Caco-2 (cell line): ENCODE measurements at regions of chr6 and their contacts with region 1.

Region 1: GRCh38 chr6:39088331-39088730 is 26.7 kb downstream of the SAYSD1 start:
- DNase-seq: peak; percentile 62 to 70
- H3K4me3 ChIP-seq: no peak overlapping the region
- H3K4me3 Mint-ChIP-seq: no peak overlapping the region
- H3K27ac Mint-ChIP-seq: no peak overlapping the region
- H3K4me1 ChIP-seq: no peaks in the 10 kb centered on the region
- H3K4me1 Mint-ChIP-seq: no peaks in the 10 kb centered on the region
- H3K27me3 ChIP-seq: no peaks in the 10 kb centered on the region; the same call in 1 of the 2 replicates
- H3K27me3 Mint-ChIP-seq: no peaks in the 10 kb centered on the region
- CTCF ChIP-seq: peak; percentile 40 to 54

Region 2: DNA sequence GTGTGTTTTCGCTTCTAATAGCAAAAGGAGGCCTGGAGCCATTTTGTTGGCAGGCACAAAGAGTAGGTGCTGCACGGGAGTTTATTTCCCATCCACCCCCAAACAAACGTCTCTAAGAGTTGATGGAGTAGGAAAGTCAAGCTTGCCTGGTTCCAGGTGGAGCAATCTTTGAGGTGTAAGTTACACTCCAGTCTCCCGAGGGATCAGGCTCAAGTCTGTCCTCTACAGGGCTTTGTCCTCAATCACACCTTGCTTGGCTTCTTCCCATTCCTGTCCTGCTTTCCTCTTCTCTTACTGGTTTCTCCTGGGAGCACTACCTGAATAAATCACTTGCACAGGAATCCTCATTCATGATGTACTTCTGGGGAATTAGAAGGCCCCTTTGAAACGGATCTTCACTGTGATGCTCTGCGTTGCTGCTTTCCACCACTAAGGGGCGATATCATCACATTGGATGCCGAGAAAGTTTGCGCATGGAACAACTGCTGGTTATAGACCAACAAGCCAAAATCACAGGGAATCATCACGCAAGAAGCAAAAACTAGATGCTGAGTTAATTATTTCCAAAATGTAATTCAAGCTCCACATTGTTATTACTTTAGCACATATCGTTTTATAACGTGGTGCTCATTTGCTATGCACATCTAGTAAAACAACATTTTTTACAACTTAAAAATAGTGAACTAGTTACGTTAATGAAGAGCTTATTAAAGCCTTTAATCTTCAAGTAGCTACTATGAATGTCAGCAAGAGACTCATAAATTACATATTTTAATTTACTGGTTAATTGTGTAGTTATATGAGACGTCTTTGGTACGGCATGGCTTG is 216.4 kb before region 1 on chr6:
- CTCF ChIA-PET with region 1: interaction called, 5 read pairs
- POLR2A ChIA-PET with region 1: no interaction called
- intact Hi-C with region 1: loop called (anchors 1 kb)
- DNase-seq: peak; percentile 49 to 72
- H3K4me3 ChIP-seq: no peak overlapping the region
- H3K4me3 Mint-ChIP-seq: no peak overlapping the region
- H3K27ac Mint-ChIP-seq: no peak overlapping the region
- H3K4me1 ChIP-seq: no peaks in the 10 kb centered on the region
- H3K4me1 Mint-ChIP-seq: no peaks in the 10 kb centered on the region
- H3K27me3 ChIP-seq: no peaks in the 10 kb centered on the region
- H3K27me3 Mint-ChIP-seq: peaks cover 6% of the 10 kb centered on the region
- CTCF ChIP-seq: peak; percentile 73 to 93

Region 3: DNA sequence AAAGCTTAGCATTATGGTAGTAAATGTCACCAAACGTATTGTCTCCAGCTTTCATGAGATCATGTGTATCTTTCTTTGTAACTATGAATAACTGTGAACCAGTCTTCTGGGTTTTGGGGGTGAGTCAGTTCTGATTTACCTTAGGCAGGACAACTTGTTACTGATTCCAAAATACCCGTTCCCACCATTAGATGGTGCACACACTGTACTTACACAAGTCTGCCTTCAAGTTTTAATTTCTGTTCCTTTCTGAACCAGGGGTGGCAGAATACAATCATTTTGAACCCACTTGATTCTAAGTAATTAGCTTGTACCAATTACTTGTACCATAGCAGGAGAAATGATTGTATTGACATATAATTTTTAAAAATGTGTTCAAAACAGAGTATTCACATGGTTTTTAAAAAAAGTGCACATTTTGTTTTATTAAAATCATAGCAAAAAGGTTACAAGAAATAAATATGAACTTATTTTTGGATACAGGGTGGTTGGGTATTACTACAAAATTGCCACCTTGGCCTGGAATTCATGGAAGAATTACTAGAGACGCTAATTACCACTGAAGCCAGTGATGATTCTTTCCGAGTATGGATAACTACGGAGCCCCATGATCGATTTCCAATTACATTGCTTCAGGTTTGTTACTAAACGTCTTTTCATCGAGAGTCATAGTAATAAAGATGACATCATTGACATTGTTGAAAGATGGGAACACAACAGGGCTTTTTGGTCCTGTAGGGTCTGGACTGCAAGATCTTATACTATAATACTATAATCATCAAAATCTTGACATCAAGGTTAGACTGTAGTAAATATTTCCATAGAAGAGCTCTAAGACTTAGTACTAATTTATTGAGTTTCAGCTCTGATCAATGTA is 114.9 kb before region 1 on chr6:
- CTCF ChIA-PET with region 1: interaction called, 18 read pairs
- POLR2A ChIA-PET with region 1: no interaction called
- intact Hi-C with region 1: loop called (anchors 1 kb)
- DNase-seq: peak in 1 of 2 experiments; percentile 68
- H3K4me3 ChIP-seq: no peak overlapping the region
- H3K4me3 Mint-ChIP-seq: no peak overlapping the region
- H3K27ac Mint-ChIP-seq: no peak overlapping the region
- H3K4me1 ChIP-seq: peaks cover 36% of the 10 kb centered on the region
- H3K4me1 Mint-ChIP-seq: peaks cover 32% of the 10 kb centered on the region
- H3K27me3 ChIP-seq: no peaks in the 10 kb centered on the region
- H3K27me3 Mint-ChIP-seq: peaks cover 5% of the 10 kb centered on the region
- CTCF ChIP-seq: peak; percentile 75 to 82

Region 4: DNA sequence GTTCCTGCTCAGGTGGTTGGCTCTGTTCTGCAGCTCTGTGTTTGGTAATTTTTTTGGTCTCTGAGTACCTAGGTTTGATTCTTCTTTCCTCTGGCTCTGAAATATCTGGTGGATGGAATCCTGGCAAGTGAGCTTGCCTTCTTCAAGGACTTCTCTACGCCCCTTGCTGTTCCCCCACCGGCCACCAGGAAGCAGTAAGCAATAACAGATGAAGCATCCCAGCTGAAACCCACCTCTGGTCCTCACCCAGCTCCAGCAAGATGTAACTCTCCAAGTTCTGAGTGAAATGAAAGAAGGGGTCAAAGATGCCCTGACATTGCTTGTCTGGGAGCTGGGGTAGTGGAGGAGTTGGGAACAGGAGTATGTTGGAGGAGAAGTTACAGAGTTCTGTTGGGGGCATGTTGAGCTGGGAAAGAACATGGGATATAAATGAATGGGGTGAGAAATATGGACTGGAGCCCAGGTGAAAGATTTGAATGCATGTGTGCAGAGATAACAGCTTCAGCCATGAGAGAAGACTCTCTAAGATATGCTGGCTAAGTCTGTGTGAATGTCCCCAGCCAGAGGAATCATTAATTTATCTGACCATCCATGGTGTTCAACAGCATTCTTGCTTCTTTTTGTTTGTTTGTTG is 91.1 kb before region 1 on chr6:
- CTCF ChIA-PET with region 1: interaction called, 33 read pairs
- POLR2A ChIA-PET with region 1: no interaction called
- intact Hi-C with region 1: loop called (anchors 1 kb)
- DNase-seq: peak; percentile 62 to 71
- H3K4me3 ChIP-seq: no peak overlapping the region
- H3K4me3 Mint-ChIP-seq: no peak overlapping the region
- H3K27ac Mint-ChIP-seq: no peak overlapping the region
- H3K4me1 ChIP-seq: no peaks in the 10 kb centered on the region
- H3K4me1 Mint-ChIP-seq: no peaks in the 10 kb centered on the region
- H3K27me3 ChIP-seq: no peaks in the 10 kb centered on the region
- H3K27me3 Mint-ChIP-seq: peaks cover 14% of the 10 kb centered on the region
- CTCF ChIP-seq: peak; percentile 69 to 88

Region 5: DNA sequence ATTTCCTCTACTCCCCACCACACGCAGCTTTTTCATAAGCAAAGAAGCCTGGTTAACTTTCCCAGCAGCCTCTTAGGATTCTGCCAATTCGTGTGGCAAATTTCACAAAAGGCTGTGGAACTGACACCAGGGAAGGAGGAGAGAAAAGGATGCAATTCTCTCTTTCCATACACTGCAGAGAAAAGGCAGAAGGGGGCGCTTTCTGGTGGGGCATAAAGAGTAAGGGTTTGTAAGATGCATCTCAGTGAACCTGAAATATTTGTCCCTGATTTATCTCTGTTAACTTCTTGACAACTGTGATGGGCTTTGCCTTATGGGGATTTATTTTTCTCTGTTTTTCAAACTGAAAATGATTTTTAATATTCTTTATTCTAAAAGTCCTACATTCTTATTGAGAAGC is 85.3 kb before region 1 on chr6:
- CTCF ChIA-PET with region 1: interaction called, 11 read pairs
- POLR2A ChIA-PET with region 1: no interaction called
- intact Hi-C with region 1: loop called (anchors 1 kb)
- DNase-seq: peak in 1 of 2 experiments; percentile 44
- H3K4me3 ChIP-seq: no peak overlapping the region
- H3K4me3 Mint-ChIP-seq: no peak overlapping the region
- H3K27ac Mint-ChIP-seq: no peak overlapping the region
- H3K4me1 ChIP-seq: peaks cover 2% of the 10 kb centered on the region
- H3K4me1 Mint-ChIP-seq: peaks cover 3% of the 10 kb centered on the region
- H3K27me3 ChIP-seq: no peaks in the 10 kb centered on the region
- H3K27me3 Mint-ChIP-seq: peaks cover 6% of the 10 kb centered on the region
- CTCF ChIP-seq: peak; percentile 45 to 51

Region 6: GRCh38 chr6:39114704-39115599 is 26.6 kb after region 1 on chr6 and contains the start of gene SAYSD1:
- CTCF ChIA-PET with region 1: interaction called, 11 read pairs
- POLR2A ChIA-PET with region 1: no interaction called
- intact Hi-C with region 1: no loop called
- DNase-seq: peak; percentile 90 to 94
- H3K4me3 ChIP-seq: peak within 1 kb of the TSS; percentile 68
- H3K4me3 Mint-ChIP-seq: peak within 1 kb of the TSS; percentile 85
- H3K27ac Mint-ChIP-seq: peak within 1 kb of the TSS; percentile 88
- H3K4me1 ChIP-seq: peaks cover 11% of the 10 kb centered on the region
- H3K4me1 Mint-ChIP-seq: peaks cover 13% of the 10 kb centered on the region
- H3K27me3 ChIP-seq: no peaks in the 10 kb centered on the region
- H3K27me3 Mint-ChIP-seq: no peaks in the 10 kb centered on the region
- CTCF ChIP-seq: no peak
- total RNA-seq, gene SAYSD1: 17.8 and 20.8 TPM in 2 replicates

Region 7: DNA sequence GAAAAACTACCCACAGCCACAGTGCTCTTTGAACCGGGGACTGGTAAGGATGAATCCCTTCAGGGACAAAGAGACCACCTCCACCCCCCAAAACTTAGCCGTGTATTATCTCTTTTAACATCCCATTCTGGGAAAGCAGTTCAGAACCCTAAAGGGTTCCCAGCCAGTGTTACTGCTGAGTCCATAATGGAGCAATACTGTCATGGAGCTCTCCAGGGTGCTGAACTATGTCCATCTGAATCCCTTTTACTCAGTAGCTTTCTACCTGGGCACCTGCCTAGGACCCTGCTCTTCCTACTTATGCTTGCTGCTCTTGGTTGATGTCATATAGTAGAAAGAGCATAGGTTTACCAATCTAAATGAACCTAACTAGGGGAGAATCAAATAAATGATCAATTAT is 48.9 kb after region 1 on chr6:
- CTCF ChIA-PET with region 1: no interaction called
- POLR2A ChIA-PET with region 1: no interaction called
- intact Hi-C with region 1: loop called (anchors 2 kb)
- DNase-seq: peak; percentile 53 to 76
- H3K4me3 ChIP-seq: no peak overlapping the region
- H3K4me3 Mint-ChIP-seq: no peak overlapping the region
- H3K27ac Mint-ChIP-seq: no peak overlapping the region
- H3K4me1 ChIP-seq: no peaks in the 10 kb centered on the region
- H3K4me1 Mint-ChIP-seq: no peaks in the 10 kb centered on the region
- H3K27me3 ChIP-seq: no peaks in the 10 kb centered on the region
- H3K27me3 Mint-ChIP-seq: peaks cover 8% of the 10 kb centered on the region
- CTCF ChIP-seq: no peak

Region 8: GRCh38 chr6:39153766-39154397 is 65.6 kb after region 1 on chr6:
- CTCF ChIA-PET with region 1: no interaction called
- POLR2A ChIA-PET with region 1: no interaction called
- intact Hi-C with region 1: no loop called
- DNase-seq: no peak
- H3K4me3 ChIP-seq: no peak overlapping the region
- H3K4me3 Mint-ChIP-seq: no peak overlapping the region
- H3K27ac Mint-ChIP-seq: no peak overlapping the region
- H3K4me1 ChIP-seq: no peaks in the 10 kb centered on the region
- H3K4me1 Mint-ChIP-seq: peaks cover 7% of the 10 kb centered on the region
- H3K27me3 ChIP-seq: no peaks in the 10 kb centered on the region
- H3K27me3 Mint-ChIP-seq: peaks cover 16% of the 10 kb centered on the region
- CTCF ChIP-seq: no peak

Region 9: DNA sequence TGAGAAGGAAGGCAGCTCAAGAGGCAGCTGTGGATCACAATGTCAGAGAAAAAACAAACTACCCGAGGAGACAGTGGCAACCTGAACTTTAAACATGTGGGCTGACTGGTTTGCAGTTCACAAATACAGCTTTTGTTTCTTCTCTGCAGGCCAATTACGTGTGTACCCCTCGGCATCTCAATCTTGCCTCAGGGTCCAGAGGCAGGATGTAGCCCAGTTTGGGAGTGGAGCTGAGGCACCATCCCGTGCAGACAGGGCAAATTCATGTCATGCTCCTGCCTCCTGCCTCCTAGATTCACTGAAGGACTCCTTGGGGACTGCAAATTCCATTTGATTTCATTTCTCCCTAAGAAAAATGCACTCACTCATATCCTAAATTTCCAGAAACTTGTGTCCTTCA is 328.4 kb after region 1 on chr6:
- CTCF ChIA-PET with region 1: no interaction called
- POLR2A ChIA-PET with region 1: no interaction called
- intact Hi-C with region 1: no loop called
- DNase-seq: peak; percentile 4 to 42
- H3K4me3 ChIP-seq: no peak overlapping the region
- H3K4me3 Mint-ChIP-seq: no peak overlapping the region
- H3K27ac Mint-ChIP-seq: no peak overlapping the region
- H3K4me1 ChIP-seq: no peaks in the 10 kb centered on the region
- H3K4me1 Mint-ChIP-seq: no peaks in the 10 kb centered on the region
- H3K27me3 ChIP-seq: no peaks in the 10 kb centered on the region
- H3K27me3 Mint-ChIP-seq: peaks cover 5% of the 10 kb centered on the region
- CTCF ChIP-seq: no peak